ENCODE measurements at regions of chr6 and their contacts with region 1.

Region 1: GRCh38 chr6:18861204-18861603 is 474.1 kb downstream of the RNF144B start:
- DNase-seq: no peak
- ATAC-seq: no peak
- H3K4me3 ChIP-seq: no peak overlapping the region
- H3K4me3 Mint-ChIP-seq: no peak overlapping the region
- H3K27ac ChIP-seq: no peak overlapping the region
- H3K27ac Mint-ChIP-seq: no peak overlapping the region
- H3K4me1 ChIP-seq: no peaks in the 10 kb centered on the region
- H3K4me1 Mint-ChIP-seq: no peaks in the 10 kb centered on the region
- H3K27me3 ChIP-seq: no peaks in the 10 kb centered on the region
- H3K27me3 Mint-ChIP-seq: no peaks in the 10 kb centered on the region

Region 2: GRCh38 chr6:18883851-18884250 is 22.6 kb after region 1 on chr6:
- CTCF ChIA-PET with region 1: interaction called in 1 of 2 experiments, 10 read pairs
- POLR2A ChIA-PET with region 1: no interaction called
- DNase-seq: no peak
- ATAC-seq: no peak
- H3K4me3 ChIP-seq: no peak overlapping the region
- H3K4me3 Mint-ChIP-seq: no peak overlapping the region
- H3K27ac ChIP-seq: no peak overlapping the region
- H3K27ac Mint-ChIP-seq: no peak overlapping the region
- H3K4me1 ChIP-seq: no peaks in the 10 kb centered on the region
- H3K4me1 Mint-ChIP-seq: no peaks in the 10 kb centered on the region
- H3K27me3 ChIP-seq: no peaks in the 10 kb centered on the region
- H3K27me3 Mint-ChIP-seq: no peaks in the 10 kb centered on the region

Measured in T-cell (primary cell).